ENCODE measurements at regions of chr5 and their contacts with region 1.

Region 1: GRCh38 chr5:144203750-144204596 is 33.3 kb downstream of the KCTD16 start:
- DNase-seq: peak; percentile 78
- H3K4me3 Mint-ChIP-seq: no peak overlapping the region
- H3K27ac Mint-ChIP-seq: no peak overlapping the region
- H3K4me1 Mint-ChIP-seq: peaks cover 8% of the 10 kb centered on the region
- H3K27me3 Mint-ChIP-seq: peaks cover 51% of the 10 kb centered on the region

Region 2: GRCh38 chr5:144292029-144292428 is 88.1 kb after region 1 on chr5:
- intact Hi-C with region 1: no loop called
- DNase-seq: no peak
- H3K4me3 Mint-ChIP-seq: no peak overlapping the region
- H3K27ac Mint-ChIP-seq: no peak overlapping the region
- H3K4me1 Mint-ChIP-seq: no peaks in the 10 kb centered on the region
- H3K27me3 Mint-ChIP-seq: no peaks in the 10 kb centered on the region

Region 3: DNA sequence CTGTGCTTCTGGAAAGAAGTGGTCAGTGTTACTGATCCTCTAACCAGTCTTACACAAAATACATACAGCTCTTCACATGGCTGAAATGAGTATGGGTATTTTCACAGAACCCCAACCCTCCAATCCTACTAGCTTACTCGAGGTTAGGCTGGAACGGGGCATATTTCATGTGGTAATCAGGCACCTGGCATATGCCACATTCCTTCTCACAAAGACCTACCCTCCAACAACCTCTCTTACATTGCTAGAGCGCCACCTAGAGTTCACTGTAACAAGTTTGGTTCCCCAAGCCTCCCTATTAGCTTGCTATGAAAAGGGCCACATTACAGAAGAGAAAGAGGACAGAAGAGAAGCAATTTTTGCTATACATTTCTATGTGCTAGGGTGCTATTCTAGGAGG is 1033.9 kb after region 1 on chr5:
- intact Hi-C with region 1: loop called (anchors 5 kb)
- DNase-seq: no peak
- H3K4me3 Mint-ChIP-seq: no peak overlapping the region
- H3K27ac Mint-ChIP-seq: no peak overlapping the region
- H3K4me1 Mint-ChIP-seq: no peaks in the 10 kb centered on the region
- H3K27me3 Mint-ChIP-seq: no peaks in the 10 kb centered on the region

Region 4: GRCh38 chr5:145483212-145483611 is 1279.2 kb after region 1 on chr5:
- intact Hi-C with region 1: no loop called
- DNase-seq: no peak
- H3K4me3 Mint-ChIP-seq: no peak overlapping the region
- H3K27ac Mint-ChIP-seq: no peak overlapping the region
- H3K4me1 Mint-ChIP-seq: no peaks in the 10 kb centered on the region
- H3K27me3 Mint-ChIP-seq: no peaks in the 10 kb centered on the region

Region 5: GRCh38 chr5:146130440-146131045 is 1926.6 kb after region 1 on chr5:
- intact Hi-C with region 1: loop called (anchors 5 kb)
- DNase-seq: no peak
- H3K4me3 Mint-ChIP-seq: no peak overlapping the region
- H3K27ac Mint-ChIP-seq: no peak overlapping the region
- H3K4me1 Mint-ChIP-seq: no peaks in the 10 kb centered on the region
- H3K27me3 Mint-ChIP-seq: no peaks in the 10 kb centered on the region